Thyroid gland (tissue), 4 donors: ENCODE measurements at regions of chr17 and their contacts with region 1.

Region 1: GRCh38 chr17:2331303-2331702 is 5.0 kb downstream of the TSR1 start:
- DNase-seq: no peak
- H3K4me3 ChIP-seq: no peak overlapping the region
- H3K27ac ChIP-seq: no peak overlapping the region
- H3K4me1 ChIP-seq: peaks cover 5 to 8% of the 10 kb centered on the region in 2 donors
- H3K27me3 ChIP-seq: no peaks in the 10 kb centered on the region
- CTCF ChIP-seq: no peak
- POLR2A ChIP-seq: no peak

Region 2: DNA sequence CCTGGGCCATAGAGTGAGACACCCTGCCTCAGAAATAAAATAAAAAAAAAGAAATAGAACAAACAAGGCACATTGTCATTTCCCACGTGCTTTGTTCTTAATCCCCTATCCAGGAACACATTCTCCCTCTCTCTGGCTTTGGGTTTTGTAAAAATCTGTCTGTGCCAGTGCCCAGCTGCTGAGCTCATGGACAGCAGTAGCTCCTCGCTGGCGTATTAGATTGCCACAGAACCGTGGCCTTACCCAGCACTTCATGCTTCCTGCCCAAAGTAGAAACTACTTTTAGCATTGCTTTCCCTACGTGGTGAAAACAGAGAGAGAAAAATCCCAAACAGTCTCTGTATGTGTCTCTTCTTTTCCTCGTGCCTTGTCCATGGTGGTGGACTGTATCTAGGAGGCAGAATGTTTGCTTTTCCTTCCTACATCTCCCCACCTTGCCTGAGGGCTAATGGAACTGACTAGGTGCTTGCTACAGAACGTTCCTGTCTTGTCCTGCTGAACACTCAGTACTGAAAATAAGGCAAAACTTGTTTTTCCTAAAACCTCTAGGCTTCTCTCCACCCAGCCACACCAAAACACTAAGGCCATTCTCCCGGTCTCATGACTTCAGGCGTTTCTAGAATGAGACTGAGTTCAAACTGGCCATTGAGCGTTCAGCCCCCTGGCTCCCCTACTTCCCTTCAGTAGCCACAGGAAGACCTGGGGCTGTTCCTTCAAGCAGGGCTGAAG is 43.4 kb after region 1 on chr17:
- intact Hi-C with region 1: loop called (anchors 5 kb)
- DNase-seq: no peak
- H3K4me3 ChIP-seq: no peak overlapping the region
- H3K27ac ChIP-seq: no peak overlapping the region
- H3K4me1 ChIP-seq: peaks cover 0 to 4% of the 10 kb centered on the region in 2 donors
- H3K27me3 ChIP-seq: no peaks in the 10 kb centered on the region
- CTCF ChIP-seq: no peak
- POLR2A ChIP-seq: no peak